ENCODE measurements at regions of chr1 and their contacts with region 1.

Region 1: DNA sequence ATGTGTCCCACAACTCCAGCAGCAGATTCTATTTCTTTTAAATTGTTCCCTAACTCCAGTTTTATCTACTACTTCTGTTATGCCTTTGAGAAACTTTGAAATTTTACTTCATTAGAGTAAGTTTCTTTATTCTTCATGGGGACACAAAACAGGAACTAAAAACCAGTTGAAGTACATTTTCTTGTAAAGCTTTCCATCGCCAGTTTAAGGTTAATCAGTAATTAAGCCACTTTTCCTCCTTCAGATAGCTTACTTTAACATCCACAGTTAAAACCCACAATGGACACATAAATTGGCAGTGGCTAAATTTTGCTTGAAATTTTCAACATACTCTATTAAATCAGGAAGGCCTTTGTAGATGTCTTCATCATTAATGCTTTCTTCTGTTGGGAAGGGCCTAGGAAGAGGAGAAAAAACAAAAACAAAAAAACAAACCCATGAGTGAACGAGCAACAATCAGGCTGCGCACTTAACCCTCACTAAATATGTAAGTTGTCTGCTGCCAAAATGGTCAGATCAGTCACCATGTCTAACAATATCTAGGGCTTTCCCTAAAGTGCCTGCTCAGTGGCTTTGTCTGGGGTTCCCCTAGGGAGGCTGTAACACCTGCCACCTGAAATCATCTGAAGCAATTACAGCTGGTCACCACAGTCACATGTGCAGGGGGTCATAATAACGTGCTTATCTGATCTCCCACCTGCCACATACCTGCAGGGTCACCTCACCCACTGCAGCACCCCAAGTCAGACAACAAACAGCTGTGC is 187.9 kb downstream of the VAV3 start:
- DNase-seq: no peak
- H3K4me3 ChIP-seq: no peak overlapping the region
- H3K4me3 Mint-ChIP-seq: no peak overlapping the region
- H3K27ac Mint-ChIP-seq: no peak overlapping the region
- H3K4me1 ChIP-seq: no peaks in the 10 kb centered on the region
- H3K4me1 Mint-ChIP-seq: no peaks in the 10 kb centered on the region
- H3K27me3 ChIP-seq: no peaks in the 10 kb centered on the region
- H3K27me3 Mint-ChIP-seq: peaks cover 5% of the 10 kb centered on the region
- CTCF ChIP-seq: no peak

Region 2: GRCh38 chr1:107897438-107898345 is 120.6 kb after region 1 on chr1:
- CTCF ChIA-PET with region 1: no interaction called
- POLR2A ChIA-PET with region 1: no interaction called
- intact Hi-C with region 1: no loop called
- DNase-seq: no peak
- H3K4me3 ChIP-seq: no peak overlapping the region
- H3K4me3 Mint-ChIP-seq: no peak overlapping the region
- H3K27ac Mint-ChIP-seq: no peak overlapping the region
- H3K4me1 ChIP-seq: no peaks in the 10 kb centered on the region
- H3K4me1 Mint-ChIP-seq: no peaks in the 10 kb centered on the region
- H3K27me3 ChIP-seq: no peaks in the 10 kb centered on the region
- H3K27me3 Mint-ChIP-seq: no peaks in the 10 kb centered on the region
- CTCF ChIP-seq: no peak

Region 3: GRCh38 chr1:107991371-107992066 is 214.4 kb after region 1 on chr1:
- CTCF ChIA-PET with region 1: no interaction called
- POLR2A ChIA-PET with region 1: no interaction called
- intact Hi-C with region 1: loop called (anchors 10 kb)
- DNase-seq: no peak
- H3K4me3 ChIP-seq: no peak overlapping the region
- H3K4me3 Mint-ChIP-seq: no peak overlapping the region
- H3K27ac Mint-ChIP-seq: no peak overlapping the region
- H3K4me1 ChIP-seq: no peaks in the 10 kb centered on the region
- H3K4me1 Mint-ChIP-seq: no peaks in the 10 kb centered on the region
- H3K27me3 ChIP-seq: no peaks in the 10 kb centered on the region
- H3K27me3 Mint-ChIP-seq: no peaks in the 10 kb centered on the region
- CTCF ChIP-seq: no peak

Measured in Caco-2 (cell line).